Prostate gland (tissue), 2 donors: ENCODE measurements at regions of chr3 and their contacts with region 1.

Region 1: DNA sequence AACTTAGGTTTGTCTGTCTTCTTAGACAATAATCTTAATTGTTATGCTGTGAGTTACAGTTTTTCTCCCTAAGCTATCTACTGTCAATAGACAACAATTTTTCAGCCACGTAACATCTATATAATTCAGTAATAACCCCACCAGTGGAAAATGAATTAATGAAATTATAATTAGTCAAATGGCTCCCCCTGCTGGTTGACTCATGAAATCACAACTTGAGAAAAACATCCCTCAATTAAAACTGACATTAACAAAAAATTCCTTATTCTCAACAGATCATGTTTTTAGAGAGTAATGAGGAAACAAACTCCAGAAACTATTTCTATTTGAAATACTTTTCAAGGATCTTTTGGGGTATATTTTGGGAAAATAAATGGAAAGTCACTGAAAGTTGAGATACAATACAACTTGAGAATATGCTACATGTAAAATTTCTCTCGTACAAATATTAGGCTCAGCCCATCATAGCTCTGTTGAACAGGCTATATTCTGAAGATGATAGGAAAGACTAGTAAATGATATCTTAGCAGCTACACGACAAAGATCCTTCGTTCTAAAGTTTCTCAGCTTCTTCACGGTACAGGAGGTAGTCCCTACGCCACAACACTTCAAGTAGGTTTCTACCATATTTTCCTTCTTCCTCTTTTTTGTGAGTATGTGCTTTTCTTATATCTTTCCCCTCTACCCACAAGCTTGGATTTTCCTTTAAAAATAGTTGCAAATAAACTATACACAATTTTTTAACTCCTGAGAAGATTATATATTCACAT is 20.7 kb downstream of the PPP1R2 start:
- DNase-seq: no peak
- H3K4me3 ChIP-seq: no peak overlapping the region
- H3K27ac ChIP-seq: no peak overlapping the region
- H3K4me1 ChIP-seq: no peaks in the 10 kb centered on the region
- H3K27me3 ChIP-seq: no peaks in the 10 kb centered on the region
- CTCF ChIP-seq: peak; percentile 76 to 93 (median 89)
- POLR2A ChIP-seq: no peak

Region 2: DNA sequence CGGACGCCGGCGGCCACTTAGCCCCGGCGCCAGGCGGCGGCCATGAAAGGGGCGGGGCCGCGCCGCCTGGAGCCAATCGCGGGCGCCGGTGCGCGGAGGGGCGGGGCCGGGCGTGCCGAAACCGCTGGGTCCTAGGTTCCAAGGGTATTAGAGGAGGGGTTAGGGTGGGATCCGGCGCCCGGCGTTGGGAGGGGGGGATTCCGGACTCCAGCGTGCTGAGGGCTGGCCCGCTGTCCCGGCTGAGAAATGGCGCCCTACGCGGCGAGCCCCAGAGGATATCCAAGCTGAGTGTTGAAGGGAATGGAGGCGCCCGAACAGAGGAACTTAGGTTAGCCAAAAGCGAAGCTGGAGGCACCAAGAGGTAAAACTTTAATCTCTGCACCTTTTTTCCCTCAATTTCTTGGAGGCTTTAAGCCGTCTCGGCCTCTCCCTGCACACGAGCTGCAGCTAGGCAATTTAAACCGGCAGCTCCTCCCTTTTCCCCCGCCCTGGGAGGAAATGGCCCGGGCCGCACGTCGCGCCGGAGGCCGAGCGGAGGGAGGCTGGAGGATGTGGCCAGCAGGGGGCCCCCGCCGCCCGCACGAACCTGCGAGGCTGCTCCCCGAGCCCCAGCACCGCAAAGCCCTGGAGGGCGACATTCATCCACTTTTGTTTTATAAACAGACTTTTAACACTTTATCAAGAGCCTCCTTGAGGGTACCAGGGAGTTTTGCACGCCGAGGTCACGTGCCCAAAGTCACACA is 251.2 kb before region 1 on chr3 and contains the start of gene XXYLT1:
- intact Hi-C with region 1: loop called (anchors 1 kb)
- DNase-seq: peak; percentile 80
- H3K4me3 ChIP-seq: peak within 1 kb of the TSS; percentile 89 to 93
- H3K27ac ChIP-seq: peak within 1 kb of the TSS; percentile 72 to 79
- H3K4me1 ChIP-seq: peaks cover 6% of the 10 kb centered on the region
- H3K27me3 ChIP-seq: no peaks in the 10 kb centered on the region
- CTCF ChIP-seq: peak; percentile 85 to 97 (median 92)
- POLR2A ChIP-seq: no peak
- total RNA-seq, gene XXYLT1: 14.9 to 22.7 TPM

Region 3: DNA sequence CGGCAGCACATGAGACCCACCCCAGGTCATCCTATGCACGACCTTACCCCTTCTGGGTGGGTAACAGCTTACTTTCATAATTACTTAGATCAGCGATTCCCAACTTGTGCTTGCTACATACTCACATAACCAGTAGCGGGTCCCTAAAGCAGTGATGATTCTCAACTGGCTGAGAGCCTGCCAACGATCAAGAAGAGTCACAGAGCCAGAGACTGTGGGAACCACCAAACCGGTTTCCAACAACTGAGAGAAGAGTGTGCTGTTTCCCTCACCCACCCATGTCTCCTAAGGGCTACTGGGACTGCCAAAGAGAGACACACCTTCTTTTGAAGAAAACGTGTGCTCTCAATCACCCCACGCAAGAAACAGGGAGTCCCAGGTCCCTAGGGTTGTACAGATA is 239.5 kb before region 1 on chr3:
- intact Hi-C with region 1: no loop called
- DNase-seq: peak; percentile 33
- H3K4me3 ChIP-seq: no peak overlapping the region
- H3K27ac ChIP-seq: no peak overlapping the region
- H3K4me1 ChIP-seq: no peaks in the 10 kb centered on the region
- H3K27me3 ChIP-seq: no peaks in the 10 kb centered on the region
- CTCF ChIP-seq: no peak
- POLR2A ChIP-seq: no peak